GM12878 (cell line): ENCODE measurements at regions of chr1 and their contacts with region 1.

Region 1: DNA sequence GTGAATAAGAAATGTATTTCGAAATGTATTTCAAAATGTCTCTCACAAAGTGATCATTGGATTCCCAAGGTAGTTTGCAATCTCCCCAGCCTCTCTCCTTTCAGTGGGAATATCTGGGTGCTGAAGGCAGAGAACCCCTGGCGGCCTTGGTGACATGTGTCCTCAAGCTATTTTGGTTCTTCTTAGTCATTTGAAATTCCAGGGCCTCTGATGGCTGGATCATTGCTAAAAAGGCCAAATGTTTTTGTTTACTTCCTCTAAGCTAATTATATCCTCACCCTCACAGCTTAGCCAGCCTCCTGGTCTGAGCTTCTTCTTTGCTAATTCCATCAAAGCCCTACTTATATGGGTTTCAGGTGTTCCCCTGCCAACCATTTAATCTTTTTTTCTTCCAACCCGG is 71.2 kb downstream of the LRRC40 start:
- DNase-seq: no peak
- ATAC-seq: no peak
- H3K4me3 ChIP-seq: no peak overlapping the region
- H3K27ac ChIP-seq: no peak overlapping the region
- H3K4me1 ChIP-seq: no peaks in the 10 kb centered on the region
- H3K27me3 ChIP-seq: no peaks in the 10 kb centered on the region
- CTCF ChIP-seq: no peak
- EP300 ChIP-seq: no peak
- POLR2A ChIP-seq: no peak
- RAD21 ChIP-seq: no peak

Region 2: GRCh38 chr1:70247768-70248167 is 113.6 kb after region 1 on chr1:
- CTCF ChIA-PET with region 1: no interaction called
- POLR2A ChIA-PET with region 1: no interaction called
- RAD21 ChIA-PET with region 1: interaction called, 4 read pairs
- SMC1A ChIA-PET with region 1: no interaction called
- in situ Hi-C with region 1: no loop called
- intact Hi-C with region 1: loop called (anchors 5 kb)
- DNase-seq: no peak
- ATAC-seq: no peak
- H3K4me3 ChIP-seq: no peak overlapping the region
- H3K27ac ChIP-seq: no peak overlapping the region
- H3K4me1 ChIP-seq: no peaks in the 10 kb centered on the region
- H3K27me3 ChIP-seq: no peaks in the 10 kb centered on the region
- CTCF ChIP-seq: no peak
- EP300 ChIP-seq: no peak
- POLR2A ChIP-seq: no peak
- RAD21 ChIP-seq: no peak

Region 3: DNA sequence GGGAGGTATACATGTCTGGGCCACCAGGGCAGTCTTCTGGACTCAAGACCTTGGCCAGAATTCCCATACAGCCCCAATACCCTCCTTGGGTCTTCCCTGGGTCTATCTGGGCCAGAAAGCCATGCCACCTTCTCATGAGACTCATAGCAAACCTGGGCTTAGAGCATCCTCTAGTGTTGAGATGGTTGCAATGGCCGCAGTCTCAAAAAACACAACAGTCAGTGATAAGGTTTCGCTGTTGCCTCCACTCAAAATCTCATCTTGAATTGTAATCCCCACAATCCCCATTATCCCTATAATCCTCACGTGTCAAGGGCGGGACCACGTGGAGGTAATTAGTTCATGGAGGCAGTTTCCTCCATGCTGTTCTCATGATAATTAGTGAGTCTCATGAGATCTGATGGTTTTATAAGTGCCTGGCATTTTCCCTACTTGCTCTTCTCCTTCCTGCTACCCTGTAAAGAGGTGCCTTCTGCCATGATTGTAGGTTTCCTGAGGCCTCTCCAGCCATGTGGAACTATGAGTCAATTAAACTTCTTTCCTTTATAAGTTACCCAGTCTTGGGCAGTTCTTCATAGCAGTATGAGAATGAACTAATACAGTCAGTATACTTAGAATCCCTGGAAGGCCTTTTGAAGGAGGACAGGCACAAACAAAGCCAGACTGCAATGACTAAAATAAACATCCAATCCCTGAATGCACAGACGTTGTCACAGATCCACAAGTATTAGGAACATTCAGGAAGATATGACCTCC is 353.9 kb after region 1 on chr1:
- CTCF ChIA-PET with region 1: interaction called, 15 read pairs
- POLR2A ChIA-PET with region 1: no interaction called
- RAD21 ChIA-PET with region 1: interaction called, 8 read pairs
- SMC1A ChIA-PET with region 1: interaction called, 9 read pairs
- in situ Hi-C with region 1: loop called (anchors 10 kb)
- intact Hi-C with region 1: loop called (anchors 1 kb)
- DNase-seq: peak; percentile 16
- ATAC-seq: peak; percentile 89
- H3K4me3 ChIP-seq: no peak overlapping the region
- H3K27ac ChIP-seq: no peak overlapping the region
- H3K4me1 ChIP-seq: no peaks in the 10 kb centered on the region
- H3K27me3 ChIP-seq: no peaks in the 10 kb centered on the region
- CTCF ChIP-seq: peak; percentile 74 to 89 (median 81)
- EP300 ChIP-seq: no peak
- POLR2A ChIP-seq: no peak
- RAD21 ChIP-seq: peak; percentile 94

Region 4: DNA sequence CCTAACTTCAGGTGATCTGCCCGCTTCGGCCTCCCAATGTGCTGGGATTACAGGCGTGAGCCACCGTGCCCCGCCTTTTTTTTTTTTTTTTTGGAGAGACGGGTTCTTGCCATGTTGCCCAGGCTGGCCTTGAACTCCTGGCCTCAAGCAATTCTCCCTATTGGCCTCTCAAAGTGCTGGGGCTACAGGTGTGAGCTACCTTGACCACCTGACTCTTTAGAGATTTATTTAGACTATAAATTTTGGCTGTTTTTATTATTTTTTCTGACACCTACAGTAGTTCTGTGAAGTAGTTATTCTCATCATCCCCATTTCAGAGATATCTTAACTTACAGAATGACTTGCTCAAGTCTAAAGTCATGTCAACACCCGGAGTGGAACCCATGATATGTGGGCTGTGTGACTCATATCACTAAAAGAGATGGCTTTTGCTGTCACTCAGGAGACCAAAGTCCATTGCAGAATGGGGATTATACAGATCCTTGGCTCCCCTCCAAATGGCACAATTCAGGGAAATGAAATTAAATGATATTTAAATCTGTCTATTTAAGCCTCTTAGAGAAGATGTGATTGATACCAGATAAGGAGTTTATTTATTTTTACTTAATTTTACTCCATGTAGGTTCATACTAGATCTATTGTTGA is 370.1 kb after region 1 on chr1:
- CTCF ChIA-PET with region 1: interaction called, 49 read pairs
- POLR2A ChIA-PET with region 1: no interaction called
- RAD21 ChIA-PET with region 1: interaction called, 9 read pairs
- SMC1A ChIA-PET with region 1: interaction called, 9 read pairs
- in situ Hi-C with region 1: no loop called
- intact Hi-C with region 1: no loop called
- DNase-seq: peak; percentile 56
- ATAC-seq: peak; percentile 95
- H3K4me3 ChIP-seq: no peak overlapping the region
- H3K27ac ChIP-seq: no peak overlapping the region
- H3K4me1 ChIP-seq: peaks cover 5% of the 10 kb centered on the region; the same call in 1 of the 2 replicates
- H3K27me3 ChIP-seq: no peaks in the 10 kb centered on the region
- CTCF ChIP-seq: no peak
- EP300 ChIP-seq: peak; percentile 89 to 97
- POLR2A ChIP-seq: no peak
- RAD21 ChIP-seq: no peak

Region 5: GRCh38 chr1:70509996-70510876 is 376.1 kb after region 1 on chr1:
- CTCF ChIA-PET with region 1: interaction called, 49 read pairs
- POLR2A ChIA-PET with region 1: no interaction called
- RAD21 ChIA-PET with region 1: interaction called, 9 read pairs
- SMC1A ChIA-PET with region 1: interaction called, 9 read pairs
- in situ Hi-C with region 1: loop called (anchors 5 kb)
- intact Hi-C with region 1: loop called (anchors 1 kb)
- DNase-seq: peak; percentile 30
- ATAC-seq: peak; percentile 94
- H3K4me3 ChIP-seq: no peak overlapping the region
- H3K27ac ChIP-seq: no peak overlapping the region
- H3K4me1 ChIP-seq: no peaks in the 10 kb centered on the region
- H3K27me3 ChIP-seq: no peaks in the 10 kb centered on the region
- CTCF ChIP-seq: peak; percentile 55 to 73 (median 58)
- EP300 ChIP-seq: no peak
- POLR2A ChIP-seq: no peak
- RAD21 ChIP-seq: peak; percentile 93

Region 6: DNA sequence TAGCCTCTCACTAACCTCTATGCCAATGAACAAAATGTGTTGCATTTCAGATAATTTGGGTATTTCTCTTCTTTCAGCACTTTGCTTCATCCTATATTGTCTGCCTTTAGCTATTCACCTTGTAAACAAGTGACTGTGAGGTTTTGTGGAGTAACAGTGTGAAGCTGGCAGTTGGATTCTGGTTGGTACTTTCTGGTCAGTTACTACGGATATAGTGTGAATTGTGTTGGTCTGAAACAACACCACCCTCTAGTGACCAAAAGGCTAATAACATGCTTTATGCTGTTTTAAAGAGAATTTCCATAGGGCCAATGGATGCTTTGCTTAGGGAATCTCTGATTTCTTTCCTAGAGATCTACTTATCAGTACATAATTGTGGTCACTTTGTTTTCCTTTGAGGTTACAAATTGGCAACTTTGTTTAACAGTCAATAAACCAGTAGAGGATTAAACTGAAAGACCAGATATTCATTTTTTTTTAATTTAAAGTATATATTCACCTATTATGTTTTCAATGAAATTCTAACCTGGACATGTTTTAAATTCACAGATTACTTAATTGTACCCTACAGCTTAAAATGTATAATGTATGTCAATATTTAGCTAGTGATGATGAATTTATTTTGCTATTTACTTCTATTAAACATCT is 915.9 kb after region 1 on chr1:
- CTCF ChIA-PET with region 1: interaction called, 3 read pairs
- POLR2A ChIA-PET with region 1: no interaction called
- RAD21 ChIA-PET with region 1: interaction called, 3 read pairs
- SMC1A ChIA-PET with region 1: no interaction called
- in situ Hi-C with region 1: loop called (anchors 10 kb)
- intact Hi-C with region 1: loop called (anchors 10 kb)
- DNase-seq: peak; percentile 25
- ATAC-seq: peak; percentile 77
- H3K4me3 ChIP-seq: no peak overlapping the region
- H3K27ac ChIP-seq: no peak overlapping the region
- H3K4me1 ChIP-seq: no peaks in the 10 kb centered on the region
- H3K27me3 ChIP-seq: peaks cover 7 to 8% of the 10 kb centered on the region in 2 experiments
- CTCF ChIP-seq: peak; percentile 65 to 83 (median 77)
- EP300 ChIP-seq: no peak
- POLR2A ChIP-seq: no peak
- RAD21 ChIP-seq: peak; percentile 81